OCI-LY7 (cell line): ENCODE measurements at regions of chr1 and their contacts with region 1.

Region 1: GRCh38 chr1:236281654-236282424 is at the start of gene ERO1B:
- DNase-seq: peak; percentile 99
- H3K4me3 ChIP-seq: peak within 1 kb of the TSS; percentile 85
- H3K27ac ChIP-seq: peak within 1 kb of the TSS; percentile 95
- H3K4me1 ChIP-seq: peaks cover 57% of the 10 kb centered on the region
- CTCF ChIP-seq: no peak
- total RNA-seq, gene ERO1B: 7.0 and 7.6 TPM in 2 replicates

Region 2: GRCh38 chr1:235328357-235329138 is 953.3 kb before region 1 on chr1 and contains the start of gene GGPS1:
- CTCF ChIA-PET with region 1: no interaction called
- POLR2A ChIA-PET with region 1: no interaction called
- intact Hi-C with region 1: loop called (anchors 5 kb)
- DNase-seq: peak; percentile 100
- H3K4me3 ChIP-seq: peak within 1 kb of the TSS; percentile 96
- H3K27ac ChIP-seq: peak within 1 kb of the TSS; percentile 91
- H3K4me1 ChIP-seq: peaks cover 44% of the 10 kb centered on the region
- CTCF ChIP-seq: no peak
- total RNA-seq, gene GGPS1: 8.0 and 21.9 TPM in 2 replicates

Region 3: DNA sequence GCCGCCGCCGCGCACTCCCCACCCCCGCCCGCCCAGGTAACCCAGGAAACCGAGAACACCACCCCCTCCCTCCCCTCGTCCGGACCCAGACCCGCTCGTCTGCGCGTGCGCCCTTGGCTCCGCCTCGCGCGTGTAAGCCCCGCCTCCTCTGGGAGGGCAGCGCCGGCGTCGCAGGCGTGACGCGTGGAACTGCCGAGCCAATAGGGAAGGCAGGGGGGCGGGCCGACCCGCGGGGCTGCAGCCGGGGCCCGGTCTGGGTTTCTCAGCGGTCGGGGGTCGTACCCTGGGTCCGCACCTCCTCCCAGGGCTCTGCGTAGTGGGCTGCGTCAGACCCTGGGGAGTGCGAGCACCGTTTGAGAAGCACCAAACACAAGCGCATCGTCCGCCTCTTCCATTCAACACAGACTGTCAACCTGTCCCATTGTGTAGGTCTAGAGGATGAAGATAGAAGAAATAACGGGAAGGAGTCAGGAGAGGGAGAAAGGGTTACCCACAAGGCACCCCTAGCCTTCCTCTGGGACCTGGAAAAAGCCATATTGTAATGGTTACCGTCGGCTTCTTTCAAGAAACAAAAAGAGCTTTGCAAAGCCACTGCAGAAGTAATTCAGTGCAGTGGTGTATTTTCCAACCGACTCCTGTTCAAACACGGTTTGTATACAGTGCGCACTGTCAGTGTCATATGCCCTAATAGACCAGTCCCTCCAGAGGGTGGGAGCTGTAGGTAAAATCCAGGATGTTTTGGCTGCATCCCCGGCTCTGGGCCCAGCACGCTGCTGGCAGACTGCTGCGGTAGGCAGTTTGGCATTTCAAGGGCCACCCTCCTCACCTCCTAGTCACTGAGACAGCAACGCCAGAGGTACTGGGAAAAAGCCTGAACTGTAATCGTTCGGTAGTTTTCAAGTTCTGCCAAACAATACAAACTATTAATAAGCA is 414.7 kb before region 1 on chr1:
- CTCF ChIA-PET with region 1: no interaction called
- POLR2A ChIA-PET with region 1: no interaction called
- intact Hi-C with region 1: loop called (anchors 10 kb)
- DNase-seq: peak; percentile 96
- H3K4me3 ChIP-seq: peak overlapping the region; percentile 78
- H3K27ac ChIP-seq: peak overlapping the region; percentile 82
- H3K4me1 ChIP-seq: peaks cover 21% of the 10 kb centered on the region
- CTCF ChIP-seq: no peak

Region 4: DNA sequence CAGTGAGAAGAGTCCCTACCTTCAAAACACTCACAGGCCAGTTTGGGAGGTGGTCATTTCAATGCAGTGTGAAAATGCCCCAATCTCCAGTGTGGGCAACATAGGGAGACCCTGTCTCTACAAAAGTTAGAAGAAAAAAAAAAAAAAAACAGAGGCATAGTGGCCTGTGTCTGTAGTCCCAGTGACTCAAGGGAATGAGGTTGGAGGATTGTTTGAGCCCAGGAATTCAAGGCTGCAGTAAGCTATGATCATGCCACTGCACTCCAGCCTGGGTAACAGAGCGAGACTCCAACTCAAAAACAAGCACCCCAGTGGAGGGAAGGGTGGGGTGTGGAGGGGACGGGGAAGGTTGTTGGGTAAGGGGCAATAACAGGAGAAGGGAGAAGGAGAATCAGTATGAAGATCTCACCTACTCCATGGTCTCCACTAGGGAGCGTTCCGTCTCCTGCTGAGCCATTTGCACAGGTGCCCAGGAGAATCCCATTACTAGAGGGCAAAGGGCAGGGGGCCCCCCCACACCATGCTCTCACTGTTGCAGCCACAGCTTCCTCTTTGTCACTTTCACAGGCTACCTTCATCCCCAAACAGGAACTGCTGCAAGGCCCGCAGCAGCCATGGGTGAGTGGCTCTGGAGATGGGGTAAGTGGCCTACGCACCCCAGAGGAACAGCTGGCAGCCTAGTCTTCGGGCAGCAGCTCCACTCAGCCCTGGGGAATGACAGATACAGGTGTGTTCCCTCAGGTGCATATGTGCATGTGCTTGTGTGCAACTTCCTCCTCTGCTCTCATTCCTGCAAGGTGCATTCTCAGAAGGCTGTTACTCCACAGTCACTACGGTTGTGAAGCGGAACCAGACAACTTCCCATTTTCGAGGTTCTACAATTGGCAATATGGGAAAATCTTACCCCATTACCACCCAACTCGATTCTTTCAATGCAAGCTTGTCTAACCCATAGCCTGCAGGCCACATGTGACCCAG is 327.2 kb before region 1 on chr1:
- CTCF ChIA-PET with region 1: no interaction called
- POLR2A ChIA-PET with region 1: no interaction called
- intact Hi-C with region 1: loop called (anchors 10 kb)
- DNase-seq: peak; percentile 85
- H3K4me3 ChIP-seq: peak overlapping the region; percentile 23
- H3K27ac ChIP-seq: peak overlapping the region; percentile 39
- H3K4me1 ChIP-seq: peaks cover 22% of the 10 kb centered on the region
- CTCF ChIP-seq: peak; percentile 54; the same call in 1 of the 2 replicates

Region 5: DNA sequence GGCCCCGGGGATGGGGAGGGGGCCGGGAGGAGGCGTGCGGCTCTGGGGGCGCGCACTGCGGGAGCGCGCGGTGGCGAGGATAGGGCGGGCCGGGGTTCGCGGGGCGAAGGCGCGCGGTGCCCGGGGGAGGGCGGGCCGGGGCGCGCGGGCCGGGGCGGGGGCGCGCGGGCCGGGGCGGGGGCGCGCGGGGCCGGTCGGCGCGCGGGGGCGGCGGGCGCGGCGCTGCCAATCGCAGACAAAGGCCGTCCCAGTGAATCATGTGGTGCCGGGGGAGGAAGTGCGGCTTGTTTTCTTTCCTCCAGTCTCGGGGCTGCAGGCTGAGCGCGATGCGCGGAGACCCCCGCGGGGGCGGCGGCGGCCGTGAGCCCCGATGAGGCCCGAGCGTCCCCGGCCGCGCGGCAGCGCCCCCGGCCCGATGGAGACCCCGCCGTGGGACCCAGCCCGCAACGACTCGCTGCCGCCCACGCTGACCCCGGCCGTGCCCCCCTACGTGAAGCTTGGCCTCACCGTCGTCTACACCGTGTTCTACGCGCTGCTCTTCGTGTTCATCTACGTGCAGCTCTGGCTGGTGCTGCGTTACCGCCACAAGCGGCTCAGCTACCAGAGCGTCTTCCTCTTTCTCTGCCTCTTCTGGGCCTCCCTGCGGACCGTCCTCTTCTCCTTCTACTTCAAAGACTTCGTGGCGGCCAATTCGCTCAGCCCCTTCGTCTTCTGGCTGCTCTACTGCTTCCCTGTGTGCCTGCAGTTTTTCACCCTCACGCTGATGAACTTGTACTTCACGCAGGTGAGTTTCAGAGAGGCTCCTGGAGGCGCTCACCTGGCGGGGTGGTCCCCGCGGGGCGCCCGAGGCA is 139.4 kb before region 1 on chr1 and contains the start of gene GPR137B:
- CTCF ChIA-PET with region 1: no interaction called
- POLR2A ChIA-PET with region 1: interaction called, 4 read pairs
- intact Hi-C with region 1: loop called (anchors 2 kb)
- DNase-seq: peak; percentile 63
- H3K4me3 ChIP-seq: peak within 1 kb of the TSS; percentile 70
- H3K27ac ChIP-seq: no peak within 1 kb of the TSS
- H3K4me1 ChIP-seq: peaks cover 10% of the 10 kb centered on the region
- CTCF ChIP-seq: no peak
- total RNA-seq, gene GPR137B: 1.2 and 2.8 TPM in 2 replicates

Region 6: GRCh38 chr1:236156512-236157208 is 125.2 kb before region 1 on chr1:
- CTCF ChIA-PET with region 1: interaction called, 3 read pairs
- POLR2A ChIA-PET with region 1: interaction called, 4 read pairs
- intact Hi-C with region 1: loop called (anchors 1 kb)
- DNase-seq: peak; percentile 86
- H3K4me3 ChIP-seq: peak overlapping the region; percentile 40
- H3K27ac ChIP-seq: peak overlapping the region; percentile 68
- H3K4me1 ChIP-seq: peaks cover 56% of the 10 kb centered on the region
- CTCF ChIP-seq: no peak

Region 7: DNA sequence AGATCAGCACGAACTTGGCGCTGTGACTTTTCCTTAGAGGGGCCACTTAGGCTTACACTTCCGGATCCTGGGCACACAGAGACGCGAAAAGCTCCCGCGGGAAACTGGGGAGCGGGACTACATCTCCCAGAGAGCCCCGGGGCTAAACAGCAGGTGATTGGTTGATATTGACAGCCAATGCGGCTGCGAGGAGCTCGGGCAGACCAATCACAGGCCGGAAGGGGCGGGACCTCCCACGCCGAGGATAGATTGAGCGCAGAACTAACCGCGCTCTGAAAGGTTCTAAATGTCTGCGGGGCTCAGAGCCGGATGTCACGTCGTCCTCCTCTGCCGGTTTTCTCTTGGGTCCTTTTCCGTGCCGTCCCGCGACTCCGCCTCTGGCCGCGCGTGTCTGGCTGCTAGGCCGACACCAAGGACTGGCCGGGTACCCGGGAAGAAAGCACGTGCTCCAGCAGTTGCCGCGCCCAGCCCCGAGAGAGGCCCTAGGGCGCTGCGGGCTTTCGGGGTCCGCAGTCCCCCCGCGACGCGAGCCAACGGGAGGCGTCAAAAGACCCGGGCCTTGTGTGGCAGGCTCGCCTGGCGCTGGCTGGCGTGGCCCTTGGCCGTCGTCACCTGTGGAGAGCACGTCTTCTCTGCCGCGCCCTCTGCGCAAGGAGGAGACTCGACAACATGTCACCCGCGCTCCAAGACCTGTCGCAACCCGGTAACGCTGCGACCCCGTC is 513.4 kb after region 1 on chr1 and contains the start of gene MTR:
- CTCF ChIA-PET with region 1: no interaction called
- POLR2A ChIA-PET with region 1: no interaction called
- intact Hi-C with region 1: loop called (anchors 5 kb)
- DNase-seq: peak; percentile 98
- H3K4me3 ChIP-seq: peak within 1 kb of the TSS; percentile 99
- H3K27ac ChIP-seq: peak within 1 kb of the TSS; percentile 77
- H3K4me1 ChIP-seq: peaks cover 27% of the 10 kb centered on the region
- CTCF ChIP-seq: no peak
- total RNA-seq, gene MTR: 22.3 and 23.0 TPM in 2 replicates